OCI-LY7 (cell line): ENCODE measurements at regions of chr4 and their contacts with region 1.

Region 1: GRCh38 chr4:106522839-106523238 is 154.3 kb upstream of the GIMD1 start:
- DNase-seq: no peak
- H3K4me3 ChIP-seq: no peak overlapping the region
- H3K27ac ChIP-seq: no peak overlapping the region
- H3K4me1 ChIP-seq: no peaks in the 10 kb centered on the region
- CTCF ChIP-seq: 0 out of 2 replicates have a peak, but pooled peaks have one; percentile 15

Region 2: GRCh38 chr4:106384878-106385277 is 138.0 kb before region 1 on chr4:
- CTCF ChIA-PET with region 1: no interaction called
- POLR2A ChIA-PET with region 1: no interaction called
- intact Hi-C with region 1: no loop called
- DNase-seq: no peak
- H3K4me3 ChIP-seq: no peak overlapping the region
- H3K27ac ChIP-seq: no peak overlapping the region
- H3K4me1 ChIP-seq: no peaks in the 10 kb centered on the region
- CTCF ChIP-seq: no peak

Region 3: GRCh38 chr4:107196312-107196711 is 673.5 kb after region 1 on chr4:
- CTCF ChIA-PET with region 1: no interaction called
- POLR2A ChIA-PET with region 1: interaction called, 10 read pairs
- intact Hi-C with region 1: no loop called
- DNase-seq: no peak
- H3K4me3 ChIP-seq: no peak overlapping the region
- H3K27ac ChIP-seq: no peak overlapping the region
- H3K4me1 ChIP-seq: no peaks in the 10 kb centered on the region
- CTCF ChIP-seq: no peak